ENCODE measurements at regions of chr3 and their contacts with region 1.

Region 1: DNA sequence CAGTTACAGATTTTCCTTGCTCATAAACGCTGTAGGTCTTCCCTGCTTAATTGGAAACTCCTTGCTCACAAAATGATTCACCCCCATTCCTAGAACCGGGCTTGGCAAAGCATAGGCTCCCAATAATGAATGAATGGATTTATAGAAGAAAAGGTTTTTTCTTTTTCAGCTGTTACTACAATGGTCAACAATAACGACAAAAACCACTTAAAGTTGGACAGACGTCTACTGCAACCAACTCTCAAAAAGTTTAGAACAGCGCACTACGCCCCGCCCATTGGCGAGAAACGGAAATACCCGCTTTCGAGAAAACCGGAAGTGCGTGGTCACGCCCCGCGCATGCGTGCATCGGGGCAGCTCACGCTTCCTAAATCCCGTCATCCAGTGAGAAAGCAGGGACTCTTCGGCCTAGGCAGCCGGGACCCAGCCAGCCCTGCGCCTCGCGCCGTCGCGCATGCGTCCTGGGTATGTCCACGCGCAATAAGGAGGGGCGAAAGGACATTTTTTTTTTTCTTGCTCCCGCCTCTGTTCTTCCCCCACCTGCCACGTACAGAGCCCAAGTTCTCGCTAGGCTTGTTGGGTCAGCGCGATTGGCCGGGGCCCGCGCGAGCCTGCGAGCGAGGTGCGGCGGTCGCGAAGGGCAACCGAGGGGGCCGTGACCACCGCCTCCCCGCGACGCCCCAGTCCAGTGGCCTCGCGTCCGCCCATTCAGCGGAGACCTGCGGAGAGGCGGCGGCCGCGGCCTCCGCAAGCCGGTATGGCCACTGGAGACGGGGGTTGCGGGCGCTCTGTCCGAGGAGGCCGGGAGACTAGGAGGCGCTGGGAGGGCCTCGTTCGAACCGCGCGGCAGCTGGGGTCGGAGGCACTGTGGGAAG is at the start of gene TFG:
- DNase-seq: peak; percentile 97 to 98 (median 98)
- ATAC-seq: peak; percentile 94
- H3K4me3 ChIP-seq: peak within 1 kb of the TSS; percentile 83
- H3K27ac ChIP-seq: peak within 1 kb of the TSS; percentile 92
- H3K4me1 ChIP-seq: peaks cover 4 to 19% of the 10 kb centered on the region in 2 experiments; a peak in 3 of 5 replicates
- H3K27me3 ChIP-seq: no peaks in the 10 kb centered on the region
- CTCF ChIP-seq: no peak
- EP300 ChIP-seq: 0 out of 2 replicates have a peak, but pooled peaks have one; percentile 7
- POLR2A ChIP-seq: peak; percentile 76
- RAD21 ChIP-seq: no peak
- polyA plus RNA-seq, gene TFG: 33.5 to 48.8 TPM

Region 2: DNA sequence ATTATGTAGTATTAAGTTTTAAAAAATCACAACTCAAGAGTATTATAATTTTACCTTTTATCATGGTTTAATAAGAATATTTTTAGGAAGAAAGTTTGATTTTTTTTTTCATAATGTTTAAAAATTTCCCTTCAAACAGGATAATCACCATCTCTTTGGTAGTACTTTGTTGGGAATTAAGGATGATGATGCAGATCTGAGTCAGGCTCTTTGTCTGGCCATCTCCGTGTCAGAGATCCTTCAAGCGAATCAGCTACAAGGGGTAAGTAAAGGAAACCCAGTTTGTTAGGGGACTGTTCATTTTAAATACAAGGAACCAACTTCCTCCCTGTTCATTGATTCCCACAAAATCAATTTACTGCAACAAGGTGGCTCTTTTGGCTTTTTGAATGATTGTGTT is 411.4 kb before region 1 on chr3:
- CTCF ChIA-PET with region 1: no interaction called
- POLR2A ChIA-PET with region 1: no interaction called
- in situ Hi-C with region 1: no loop called
- intact Hi-C with region 1: no loop called
- DNase-seq: no peak
- ATAC-seq: no peak
- H3K4me3 ChIP-seq: no peak overlapping the region
- H3K27ac ChIP-seq: no peak overlapping the region
- H3K4me1 ChIP-seq: no peaks in the 10 kb centered on the region
- H3K27me3 ChIP-seq: no peaks in the 10 kb centered on the region
- CTCF ChIP-seq: no peak
- EP300 ChIP-seq: no peak
- POLR2A ChIP-seq: no peak
- RAD21 ChIP-seq: no peak

Region 3: DNA sequence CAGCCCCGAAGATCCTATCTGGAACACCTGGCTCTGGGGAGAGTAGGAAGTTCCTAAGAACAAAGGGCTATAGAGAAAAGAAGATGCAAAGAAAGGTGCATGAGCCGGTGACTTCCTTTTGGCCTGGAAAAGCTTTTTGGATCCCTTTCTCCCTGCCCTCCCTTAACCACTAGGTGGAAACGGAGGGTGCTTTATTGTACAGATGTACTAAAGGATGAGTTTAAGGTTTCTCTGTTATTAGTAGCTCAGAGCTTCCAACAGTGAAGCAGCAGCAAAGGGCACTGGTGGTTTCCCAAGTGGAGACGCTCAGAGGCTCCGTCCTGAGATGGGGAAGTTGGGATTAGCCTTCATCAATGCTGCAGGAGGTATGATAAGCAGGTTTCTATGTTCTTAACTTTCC is 105.7 kb before region 1 on chr3:
- CTCF ChIA-PET with region 1: no interaction called
- POLR2A ChIA-PET with region 1: no interaction called
- in situ Hi-C with region 1: no loop called
- intact Hi-C with region 1: loop called (anchors 5 kb)
- DNase-seq: peak in 2 of 4 experiments; percentile 15 to 41
- ATAC-seq: peak; percentile 86
- H3K4me3 ChIP-seq: no peak overlapping the region
- H3K27ac ChIP-seq: no peak overlapping the region
- H3K4me1 ChIP-seq: peaks cover 0 to 8% of the 10 kb centered on the region in 2 experiments; a peak in 3 of 5 replicates
- H3K27me3 ChIP-seq: no peaks in the 10 kb centered on the region
- CTCF ChIP-seq: peak; percentile 36 to 49 (median 38); a peak in 4 of 6 replicates
- EP300 ChIP-seq: no peak
- POLR2A ChIP-seq: no peak
- RAD21 ChIP-seq: peak in 1 of 2 experiments; percentile 57; a peak in 2 of 4 replicates

Region 4: GRCh38 chr3:100665230-100665629 is 44.0 kb before region 1 on chr3:
- CTCF ChIA-PET with region 1: no interaction called
- POLR2A ChIA-PET with region 1: interaction called, 3 read pairs
- in situ Hi-C with region 1: no loop called
- intact Hi-C with region 1: loop called (anchors 5 kb)
- DNase-seq: no peak
- ATAC-seq: peak; percentile 32; the same call in 2 of the 3 replicates
- H3K4me3 ChIP-seq: no peak overlapping the region
- H3K27ac ChIP-seq: no peak overlapping the region
- H3K4me1 ChIP-seq: peaks cover 0 to 2% of the 10 kb centered on the region in 2 experiments; a peak in 2 of 5 replicates
- H3K27me3 ChIP-seq: no peaks in the 10 kb centered on the region
- CTCF ChIP-seq: no peak
- EP300 ChIP-seq: no peak
- POLR2A ChIP-seq: no peak
- RAD21 ChIP-seq: no peak

Region 5: GRCh38 chr3:100725935-100726513 is 16.8 kb after region 1 on chr3:
- CTCF ChIA-PET with region 1: no interaction called
- POLR2A ChIA-PET with region 1: interaction called, 29 read pairs
- in situ Hi-C with region 1: no loop called
- intact Hi-C with region 1: no loop called
- DNase-seq: no peak
- ATAC-seq: no peak
- H3K4me3 ChIP-seq: no peak overlapping the region
- H3K27ac ChIP-seq: no peak overlapping the region
- H3K4me1 ChIP-seq: no peaks in the 10 kb centered on the region
- H3K27me3 ChIP-seq: no peaks in the 10 kb centered on the region
- CTCF ChIP-seq: no peak
- EP300 ChIP-seq: no peak
- POLR2A ChIP-seq: no peak
- RAD21 ChIP-seq: no peak

Measured in K562 (cell line).